ENCODE measurements at regions of chr17 and their contacts with region 1.

Region 1: DNA sequence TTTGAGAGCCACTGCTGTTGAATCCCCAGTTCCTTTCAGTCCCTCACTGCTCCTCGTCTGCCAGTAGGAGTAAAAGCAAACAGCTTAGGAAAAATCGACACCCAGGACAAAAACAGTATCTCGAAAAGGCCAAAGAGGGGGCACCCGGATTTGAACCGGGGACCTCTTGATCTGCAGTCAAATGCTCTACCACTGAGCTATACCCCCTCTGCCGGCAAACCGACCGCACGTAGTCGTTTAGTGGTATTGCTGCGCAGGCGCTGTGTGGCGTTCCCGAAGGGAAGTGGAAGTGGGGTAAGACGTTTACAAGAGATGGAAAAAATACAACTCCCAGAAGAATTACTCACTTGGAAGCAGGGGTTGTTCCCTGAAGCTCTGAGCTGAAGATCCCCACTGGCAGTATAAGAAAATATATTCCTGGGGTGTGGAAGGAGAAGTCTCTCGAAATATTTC is 2.2 kb upstream of the PLXDC1 start:
- DNase-seq: peak; percentile 68
- H3K4me3 ChIP-seq: peak overlapping the region; percentile 83 to 89
- H3K27ac ChIP-seq: peak overlapping the region; percentile 58 to 59
- H3K4me1 ChIP-seq: peaks cover 0 to 20% of the 10 kb centered on the region in 2 experiments; a peak in 1 of 4 replicates
- H3K27me3 ChIP-seq: peaks cover 13% of the 10 kb centered on the region; the same call in 1 of the 2 replicates
- CTCF ChIP-seq: no peak; the same call in 1 of the 2 replicates
- EP300 ChIP-seq: peak in 1 of 2 experiments; percentile 54; a peak in 1 of 4 replicates
- RAD21 ChIP-seq: no peak

Region 2: DNA sequence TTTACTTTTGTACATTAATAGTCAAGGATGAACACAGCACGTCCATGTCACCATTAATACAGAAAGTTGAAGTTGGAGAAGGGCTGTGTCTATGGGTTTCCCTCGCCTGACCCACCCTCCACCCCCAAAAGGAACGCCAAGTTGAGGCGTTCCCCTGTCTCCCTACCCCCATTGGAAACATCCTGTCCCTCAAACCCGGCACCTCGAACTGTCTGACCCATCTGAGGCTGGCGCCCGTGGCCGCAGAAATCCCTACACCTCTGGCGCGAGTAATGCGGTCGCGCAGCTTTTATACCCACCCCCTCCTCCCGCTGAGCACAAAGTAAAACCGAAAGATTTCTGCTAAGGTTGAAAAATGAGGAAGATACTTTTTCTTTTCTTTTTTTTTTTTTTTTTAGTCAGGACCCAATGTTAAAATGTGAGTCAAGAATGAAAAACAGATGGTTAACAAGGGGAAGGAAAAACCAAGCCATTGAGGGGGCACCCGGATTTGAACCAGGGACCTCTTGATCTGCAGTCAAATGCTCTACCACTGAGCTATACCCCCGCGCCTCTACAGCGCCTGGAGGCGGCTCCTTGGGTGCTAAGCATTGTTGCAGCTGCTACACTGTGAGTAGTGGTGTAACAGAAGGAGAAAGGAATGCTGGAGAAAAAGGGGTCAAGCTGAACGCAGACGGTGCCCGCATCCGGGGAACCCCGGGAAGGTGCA is 284.7 kb before region 1 on chr17:
- CTCF ChIA-PET with region 1: interaction called, 16 read pairs
- POLR2A ChIA-PET with region 1: interaction called, 3 read pairs
- DNase-seq: peak; percentile 64
- H3K4me3 ChIP-seq: peak overlapping the region; percentile 94 to 97
- H3K27ac ChIP-seq: peak overlapping the region; percentile 89 to 96
- H3K4me1 ChIP-seq: peaks cover 19 to 28% of the 10 kb centered on the region in 2 experiments; a peak in 3 of 4 replicates
- H3K27me3 ChIP-seq: no peaks in the 10 kb centered on the region
- CTCF ChIP-seq: peak; percentile 52
- EP300 ChIP-seq: peak in 1 of 2 experiments; percentile 11; a peak in 2 of 4 replicates
- RAD21 ChIP-seq: 0 out of 2 replicates have a peak, but pooled peaks have one; percentile 0

Region 3: DNA sequence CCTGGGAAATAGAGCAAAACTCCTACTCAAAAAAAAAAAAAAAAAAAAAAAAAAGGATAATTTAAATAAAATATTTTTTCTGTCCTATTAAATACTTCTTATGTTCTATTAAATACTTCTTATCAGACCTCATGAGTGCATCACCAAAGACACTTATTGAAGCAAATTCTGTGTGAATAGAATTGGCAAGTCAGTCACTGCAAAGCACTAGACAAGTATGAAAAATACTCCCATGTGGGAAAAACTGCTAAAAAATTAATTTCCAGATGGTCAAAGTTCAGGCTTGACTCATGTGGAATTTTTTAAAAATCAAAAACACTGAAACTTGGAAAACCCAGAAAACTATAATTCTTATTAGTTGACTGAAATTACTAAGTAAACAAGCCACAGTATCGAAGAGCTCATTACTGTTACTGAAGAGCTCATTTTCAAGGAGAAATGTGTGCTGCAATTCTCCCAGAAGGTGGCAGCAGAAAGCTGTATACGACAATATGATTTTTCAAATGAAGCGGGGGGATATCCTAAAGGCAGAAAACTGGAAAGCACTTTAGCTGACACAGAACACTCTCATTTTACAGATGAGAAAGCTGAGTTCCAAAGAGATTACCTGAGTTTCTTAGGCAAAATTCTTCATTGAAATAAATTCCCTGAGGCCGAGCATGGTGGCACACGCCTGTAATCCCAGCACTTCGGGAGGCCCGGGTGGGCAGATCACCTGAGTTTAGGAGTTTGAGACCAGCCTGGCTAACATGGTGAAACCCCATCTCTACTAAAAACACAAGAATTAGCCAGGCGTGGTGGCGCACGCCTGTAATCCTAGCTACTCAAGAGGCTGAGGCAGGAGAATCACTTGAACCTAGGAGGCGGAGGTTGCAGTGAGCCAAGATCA is 170.5 kb before region 1 on chr17:
- CTCF ChIA-PET with region 1: interaction called, 174 read pairs
- POLR2A ChIA-PET with region 1: interaction called, 6 read pairs
- DNase-seq: peak; percentile 75
- H3K4me3 ChIP-seq: no peak overlapping the region; a peak in 1 of 4 replicates
- H3K27ac ChIP-seq: no peak overlapping the region
- H3K4me1 ChIP-seq: peaks cover 0 to 12% of the 10 kb centered on the region in 2 experiments; a peak in 2 of 4 replicates
- H3K27me3 ChIP-seq: no peaks in the 10 kb centered on the region
- CTCF ChIP-seq: peak; percentile 91
- EP300 ChIP-seq: no peak
- RAD21 ChIP-seq: peak; percentile 94

Region 4: GRCh38 chr17:39057701-39058206 is 95.9 kb before region 1 on chr17:
- CTCF ChIA-PET with region 1: interaction called, 12 read pairs
- POLR2A ChIA-PET with region 1: no interaction called
- DNase-seq: no peak
- H3K4me3 ChIP-seq: peak overlapping the region; percentile 63 to 81
- H3K27ac ChIP-seq: no peak overlapping the region
- H3K4me1 ChIP-seq: peaks cover 0 to 4% of the 10 kb centered on the region in 2 experiments; a peak in 2 of 4 replicates
- H3K27me3 ChIP-seq: peaks cover 1% of the 10 kb centered on the region; the same call in 1 of the 2 replicates
- CTCF ChIP-seq: no peak
- EP300 ChIP-seq: no peak
- RAD21 ChIP-seq: no peak

Region 5: GRCh38 chr17:39077866-39078265 is 75.8 kb before region 1 on chr17:
- CTCF ChIA-PET with region 1: interaction called, 20 read pairs
- POLR2A ChIA-PET with region 1: no interaction called
- DNase-seq: no peak
- H3K4me3 ChIP-seq: no peak overlapping the region
- H3K27ac ChIP-seq: no peak overlapping the region
- H3K4me1 ChIP-seq: peaks cover 0 to 7% of the 10 kb centered on the region in 2 experiments; a peak in 1 of 4 replicates
- H3K27me3 ChIP-seq: no peaks in the 10 kb centered on the region
- CTCF ChIP-seq: peak; percentile 13; the same call in 1 of the 2 replicates
- EP300 ChIP-seq: no peak
- RAD21 ChIP-seq: no peak

Region 6: DNA sequence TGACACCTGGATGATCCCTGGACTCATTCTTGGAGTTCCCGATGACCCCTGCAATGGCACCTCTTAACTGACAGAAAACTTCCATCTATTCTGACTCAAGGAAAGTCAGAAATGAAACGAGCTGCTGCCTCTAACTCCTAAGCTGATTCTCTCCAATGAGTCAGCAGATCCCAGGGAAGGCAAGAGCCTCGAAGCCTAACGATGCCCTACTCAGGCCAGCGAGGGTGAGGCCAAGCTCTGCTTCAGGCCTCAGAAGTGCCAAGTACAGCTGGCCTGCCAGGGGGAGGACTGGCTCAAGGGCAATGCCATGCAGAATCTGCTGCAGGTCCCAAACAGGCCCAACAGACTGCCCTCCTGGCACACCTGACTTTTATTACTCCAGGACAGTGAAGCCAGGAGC is 38.5 kb before region 1 on chr17:
- CTCF ChIA-PET with region 1: interaction called, 17 read pairs
- POLR2A ChIA-PET with region 1: no interaction called
- DNase-seq: no peak
- H3K4me3 ChIP-seq: no peak overlapping the region
- H3K27ac ChIP-seq: no peak overlapping the region
- H3K4me1 ChIP-seq: peaks cover 0 to 15% of the 10 kb centered on the region in 2 experiments; a peak in 1 of 4 replicates
- H3K27me3 ChIP-seq: no peaks in the 10 kb centered on the region
- CTCF ChIP-seq: no peak
- EP300 ChIP-seq: no peak
- RAD21 ChIP-seq: no peak

Region 7: DNA sequence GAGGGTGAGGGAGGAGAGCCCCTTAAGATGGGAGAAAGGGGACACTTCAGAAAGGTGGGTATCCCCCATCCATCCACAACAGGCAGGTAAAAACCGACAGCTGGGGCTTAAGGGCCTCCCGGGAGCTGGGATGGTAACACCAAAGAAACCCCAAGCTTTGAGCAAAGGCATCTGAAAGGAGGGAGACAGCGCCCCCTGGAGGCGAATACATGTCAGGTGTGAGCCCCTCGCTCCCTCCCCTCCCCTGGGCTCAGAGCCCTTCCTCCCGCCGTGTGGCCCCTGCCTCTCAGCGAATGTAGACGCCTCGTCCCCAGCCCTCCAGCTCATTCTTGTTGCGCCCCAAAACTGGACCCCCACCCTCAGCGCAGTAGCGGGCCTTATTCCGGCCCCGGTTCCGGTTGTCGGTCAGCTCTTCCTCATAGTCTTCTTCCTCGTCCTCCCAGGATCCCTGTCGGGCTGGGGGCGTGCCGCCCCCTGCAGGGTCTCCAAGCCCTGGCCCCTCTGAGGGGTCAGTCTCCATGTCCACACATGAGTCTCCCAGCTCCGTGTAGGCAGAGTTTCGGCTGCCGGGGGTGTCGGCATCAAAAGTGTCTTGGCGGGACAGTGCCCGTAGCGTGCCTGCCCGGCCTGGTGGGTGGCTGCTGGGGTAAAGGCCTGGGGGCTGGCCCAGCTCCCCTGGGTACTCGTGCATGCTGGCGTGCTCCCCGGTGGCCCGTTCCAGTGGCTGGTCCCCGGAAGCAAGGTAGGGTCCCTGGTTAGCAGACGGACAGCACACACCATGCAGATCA is 21.5 kb after region 1 on chr17:
- CTCF ChIA-PET with region 1: interaction called, 71 read pairs
- POLR2A ChIA-PET with region 1: no interaction called
- DNase-seq: peak; percentile 93
- H3K4me3 ChIP-seq: no peak overlapping the region
- H3K27ac ChIP-seq: no peak overlapping the region
- H3K4me1 ChIP-seq: no peaks in the 10 kb centered on the region; a peak in 1 of 4 replicates
- H3K27me3 ChIP-seq: no peaks in the 10 kb centered on the region
- CTCF ChIP-seq: peak; percentile 85
- EP300 ChIP-seq: no peak
- RAD21 ChIP-seq: peak; percentile 67

Measured in SK-N-SH (cell line).